ENCODE measurements at regions of chr5 and their contacts with region 1.

Region 1: DNA sequence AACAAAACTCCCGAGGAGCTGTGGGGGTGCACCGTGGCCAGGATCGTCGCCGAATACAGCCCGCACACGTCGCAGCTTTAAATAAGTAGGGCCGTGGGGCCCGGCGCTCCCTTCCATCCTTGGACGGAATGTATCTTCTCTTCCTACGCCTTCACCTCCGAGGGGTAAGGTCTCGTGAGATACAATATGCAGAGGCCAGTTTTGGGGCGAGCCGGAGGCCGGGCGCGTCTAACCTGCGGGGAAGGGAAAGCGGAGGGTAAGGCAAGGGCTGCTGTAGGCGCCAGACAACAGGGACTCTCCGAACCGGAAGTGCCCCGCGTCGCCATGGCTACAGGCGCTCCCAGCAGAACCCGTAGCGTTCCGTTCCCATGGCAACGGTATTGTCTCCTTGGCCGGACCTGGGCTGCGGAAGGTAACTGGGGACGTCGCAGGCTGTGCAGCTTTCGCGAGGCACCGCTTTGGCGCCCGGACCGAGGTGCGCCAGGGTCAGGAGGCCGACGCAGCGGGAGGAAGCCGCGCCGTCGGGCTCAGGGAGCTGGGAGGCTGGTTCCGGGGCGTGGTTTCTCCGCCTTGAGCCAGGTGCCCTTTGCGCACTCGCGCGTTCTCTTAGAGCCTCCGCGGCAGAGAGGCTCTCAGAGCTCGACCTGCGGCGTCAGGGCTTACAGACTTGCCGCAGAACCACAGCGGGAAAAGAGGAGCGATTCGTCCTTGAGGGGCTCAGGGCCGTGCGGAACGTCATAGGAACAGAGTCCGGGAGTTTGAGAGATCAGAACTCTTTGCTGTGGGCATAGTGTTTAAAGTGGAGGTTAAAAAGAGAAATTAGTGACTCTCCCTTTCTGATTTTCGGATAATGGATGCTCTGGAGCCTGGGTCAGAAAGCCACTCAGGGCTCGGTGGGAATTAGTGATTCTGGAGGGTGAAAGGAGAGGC is at the start of gene TTC23L:
- DNase-seq: peak; percentile 88
- H3K4me3 Mint-ChIP-seq: peak within 1 kb of the TSS; percentile 93
- H3K27ac Mint-ChIP-seq: peak within 1 kb of the TSS; percentile 81
- H3K4me1 Mint-ChIP-seq: peaks cover 15% of the 10 kb centered on the region
- H3K27me3 Mint-ChIP-seq: peaks cover 11% of the 10 kb centered on the region
- total RNA-seq, gene TTC23L: not detected in 2 replicates

Region 2: GRCh38 chr5:34656001-34656699 is 182.9 kb before region 1 on chr5 and contains the start of gene RAI14:
- intact Hi-C with region 1: loop called (anchors 5 kb)
- DNase-seq: peak; percentile 1
- H3K4me3 Mint-ChIP-seq: peak within 1 kb of the TSS; percentile 86
- H3K27ac Mint-ChIP-seq: peak within 1 kb of the TSS; percentile 29
- H3K4me1 Mint-ChIP-seq: peaks cover 18% of the 10 kb centered on the region
- H3K27me3 Mint-ChIP-seq: peaks cover 60% of the 10 kb centered on the region
- total RNA-seq, gene RAI14: 1.2 and 1.5 TPM in 2 replicates

Region 3: DNA sequence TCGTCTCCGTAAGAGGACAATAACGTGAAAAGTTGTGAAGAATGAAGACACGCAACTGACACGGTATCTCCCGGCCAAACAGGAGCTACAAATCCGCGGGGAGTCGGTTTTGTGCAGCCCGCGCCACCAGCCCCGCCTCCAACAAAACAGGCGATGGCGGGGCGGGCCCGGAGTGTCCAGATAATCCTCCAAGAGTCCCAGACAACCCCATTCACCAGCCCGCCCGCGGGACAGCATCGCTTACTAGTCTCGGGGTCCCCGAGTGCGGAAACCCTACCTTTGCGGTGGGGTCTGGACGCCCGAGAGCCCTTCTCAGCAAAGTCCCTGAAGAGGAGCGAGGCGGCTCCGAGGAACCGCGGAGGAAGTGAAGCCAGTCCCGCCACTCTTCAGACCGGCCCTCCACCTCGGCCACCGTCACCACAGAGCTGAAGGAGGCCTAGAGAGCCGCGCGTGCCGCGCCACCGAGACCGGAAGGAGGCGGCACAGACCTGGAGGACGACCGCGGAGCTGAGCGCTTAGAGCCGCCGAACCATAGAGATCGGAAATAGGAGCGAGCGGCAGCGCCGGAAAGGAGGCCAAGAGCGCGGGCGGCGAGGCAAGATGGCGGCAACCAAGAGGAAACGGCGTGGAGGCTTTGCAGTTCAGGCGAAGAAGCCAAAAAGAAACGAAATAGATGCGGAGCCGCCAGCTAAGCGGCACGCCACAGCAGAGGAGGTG is 76.2 kb after region 1 on chr5 and contains the starts of genes BRIX1 and RAD1:
- intact Hi-C with region 1: loop called (anchors 1 kb)
- DNase-seq: peak; percentile 94
- H3K4me3 Mint-ChIP-seq: no peak within 1 kb of the TSS
- H3K27ac Mint-ChIP-seq: peak within 1 kb of the TSS; percentile 74
- H3K4me1 Mint-ChIP-seq: peaks cover 35% of the 10 kb centered on the region
- H3K27me3 Mint-ChIP-seq: no peaks in the 10 kb centered on the region
- total RNA-seq, gene BRIX1: 110 TPM in 2 replicates
- total RNA-seq, gene RAD1: 45.7 and 47.1 TPM in 2 replicates

Measured in activated T-helper 1 cell treated with anti-CD3 and anti-CD28 coated beads, Interleukin-12 subunit alpha, Interleukin-12 subunit beta, Interleukin-2, Interleukin-4 antibody, amounts not matched to agents 30 ng/mL and 10 ng/mL and 1 ng/mL, durations not matched to agents 14 hours and 24 hours and 36 hours (primary cell).